Activated CD4-positive, alpha-beta T cell treated with anti-CD3 and anti-CD28 coated beads, Interleukin-2, amount 10 ng/mL, durations not matched to agents 7 days and 5 days (primary cell): ENCODE measurements at regions of chr6 and their contacts with region 1.

Region 1: GRCh38 chr6:13614926-13615798 is at the start of gene NOL7:
- DNase-seq: peak; percentile 99
- H3K4me3 Mint-ChIP-seq: peak within 1 kb of the TSS; percentile 92
- H3K27ac Mint-ChIP-seq: peak within 1 kb of the TSS; percentile 92
- H3K4me1 Mint-ChIP-seq: peaks cover 57% of the 10 kb centered on the region
- H3K27me3 Mint-ChIP-seq: no peaks in the 10 kb centered on the region
- total RNA-seq, gene NOL7: 53.5 to 57.7 TPM

Region 2: DNA sequence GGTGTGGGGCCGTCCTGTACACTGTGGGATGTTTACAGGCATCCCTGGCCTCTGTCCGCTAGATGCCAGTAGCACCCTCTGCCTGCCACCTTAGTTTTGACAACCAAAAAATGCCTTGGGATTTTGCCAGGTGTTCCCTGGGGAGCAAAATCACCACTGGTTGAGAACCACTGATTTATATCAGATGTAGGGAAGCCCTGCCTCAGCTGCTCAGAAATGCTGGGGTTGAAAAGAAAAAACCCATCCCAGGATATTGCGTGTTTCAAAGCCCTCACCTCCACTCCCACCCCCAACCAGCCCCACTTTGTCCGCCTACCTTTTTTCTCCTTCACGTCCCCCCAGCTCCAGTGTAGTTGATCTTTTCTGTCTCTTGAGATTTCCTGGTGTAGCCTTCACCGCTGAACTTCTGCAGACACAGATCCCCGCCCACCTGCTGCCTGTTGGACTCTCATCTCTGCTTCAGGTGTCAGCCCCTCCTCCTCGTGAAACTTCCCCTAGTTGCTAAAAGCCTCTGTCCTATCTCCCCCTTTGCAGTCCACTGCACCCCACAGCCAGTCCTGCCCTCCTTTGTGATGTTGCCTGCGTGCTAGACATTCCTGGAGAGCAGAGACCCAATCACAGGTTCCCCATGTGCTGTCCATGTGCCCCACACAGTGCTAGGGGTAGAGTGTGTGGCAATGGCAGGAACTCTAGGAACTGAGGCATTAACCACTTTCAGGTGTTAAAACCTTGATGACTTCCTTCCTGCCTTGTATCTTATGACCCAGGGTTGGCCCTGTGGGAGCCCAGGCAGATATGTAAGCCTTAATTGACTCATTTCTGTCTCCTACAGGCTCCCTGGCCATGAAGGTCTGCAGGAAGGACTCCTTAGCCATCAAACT is 385.7 kb before region 1 on chr6:
- CTCF ChIA-PET with region 1: no interaction called
- POLR2A ChIA-PET with region 1: no interaction called
- DNase-seq: peak; percentile 9
- H3K4me3 Mint-ChIP-seq: no peak overlapping the region
- H3K27ac Mint-ChIP-seq: no peak overlapping the region
- H3K4me1 Mint-ChIP-seq: peaks cover 13% of the 10 kb centered on the region
- H3K27me3 Mint-ChIP-seq: no peaks in the 10 kb centered on the region

Region 3: GRCh38 chr6:13522656-13523055 is 92.5 kb before region 1 on chr6:
- CTCF ChIA-PET with region 1: no interaction called
- POLR2A ChIA-PET with region 1: no interaction called
- DNase-seq: no peak
- H3K4me3 Mint-ChIP-seq: no peak overlapping the region
- H3K27ac Mint-ChIP-seq: no peak overlapping the region
- H3K4me1 Mint-ChIP-seq: peaks cover 13% of the 10 kb centered on the region
- H3K27me3 Mint-ChIP-seq: peaks cover 5% of the 10 kb centered on the region

Region 4: DNA sequence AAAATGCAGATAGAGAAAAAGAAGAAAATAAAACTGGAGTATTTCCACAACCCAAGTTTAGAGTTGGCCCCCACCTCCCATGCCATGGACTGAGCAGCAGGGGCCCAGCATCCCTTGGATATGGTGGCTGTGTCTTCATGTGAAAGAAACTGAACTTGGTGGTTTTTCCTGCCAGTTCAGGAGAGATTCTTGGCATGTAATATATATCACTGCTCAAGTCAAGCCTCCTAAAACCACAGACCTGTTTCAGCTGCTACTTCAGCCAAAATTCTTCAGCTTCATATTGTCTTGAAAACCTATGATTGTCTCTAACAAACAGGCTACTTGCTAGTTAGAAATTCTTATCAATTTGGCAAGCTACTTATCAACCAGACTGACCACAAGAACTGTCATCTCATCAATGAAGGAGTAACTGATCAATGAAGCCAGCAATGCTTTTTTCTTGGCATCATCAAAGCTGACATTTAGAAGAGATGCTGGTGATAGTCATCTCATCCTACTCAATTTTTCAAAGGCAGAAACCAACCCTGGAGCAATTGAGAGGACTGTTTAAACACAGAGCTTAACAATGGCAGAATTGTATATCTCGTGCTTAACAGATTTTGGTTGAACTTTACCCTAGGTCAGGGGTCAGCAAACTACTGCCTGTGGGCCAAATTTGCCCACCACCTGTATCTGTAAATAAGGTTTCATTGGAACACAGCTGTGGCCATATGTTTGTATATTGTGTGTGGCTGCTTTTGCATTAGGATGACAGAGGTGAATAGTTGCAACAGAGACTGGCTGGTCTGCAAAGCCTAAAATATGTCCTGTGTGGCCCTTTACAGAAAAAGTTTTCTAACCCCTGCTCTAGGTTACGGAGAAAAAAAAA is 10.4 kb before region 1 on chr6:
- CTCF ChIA-PET with region 1: interaction called, 15 read pairs
- POLR2A ChIA-PET with region 1: no interaction called
- DNase-seq: no peak
- H3K4me3 Mint-ChIP-seq: no peak overlapping the region
- H3K27ac Mint-ChIP-seq: no peak overlapping the region
- H3K4me1 Mint-ChIP-seq: no peaks in the 10 kb centered on the region
- H3K27me3 Mint-ChIP-seq: no peaks in the 10 kb centered on the region